Esophagus squamous epithelium (tissue), 5 donors: ENCODE measurements at regions of chr12 and their contacts with region 1.

Region 1: DNA sequence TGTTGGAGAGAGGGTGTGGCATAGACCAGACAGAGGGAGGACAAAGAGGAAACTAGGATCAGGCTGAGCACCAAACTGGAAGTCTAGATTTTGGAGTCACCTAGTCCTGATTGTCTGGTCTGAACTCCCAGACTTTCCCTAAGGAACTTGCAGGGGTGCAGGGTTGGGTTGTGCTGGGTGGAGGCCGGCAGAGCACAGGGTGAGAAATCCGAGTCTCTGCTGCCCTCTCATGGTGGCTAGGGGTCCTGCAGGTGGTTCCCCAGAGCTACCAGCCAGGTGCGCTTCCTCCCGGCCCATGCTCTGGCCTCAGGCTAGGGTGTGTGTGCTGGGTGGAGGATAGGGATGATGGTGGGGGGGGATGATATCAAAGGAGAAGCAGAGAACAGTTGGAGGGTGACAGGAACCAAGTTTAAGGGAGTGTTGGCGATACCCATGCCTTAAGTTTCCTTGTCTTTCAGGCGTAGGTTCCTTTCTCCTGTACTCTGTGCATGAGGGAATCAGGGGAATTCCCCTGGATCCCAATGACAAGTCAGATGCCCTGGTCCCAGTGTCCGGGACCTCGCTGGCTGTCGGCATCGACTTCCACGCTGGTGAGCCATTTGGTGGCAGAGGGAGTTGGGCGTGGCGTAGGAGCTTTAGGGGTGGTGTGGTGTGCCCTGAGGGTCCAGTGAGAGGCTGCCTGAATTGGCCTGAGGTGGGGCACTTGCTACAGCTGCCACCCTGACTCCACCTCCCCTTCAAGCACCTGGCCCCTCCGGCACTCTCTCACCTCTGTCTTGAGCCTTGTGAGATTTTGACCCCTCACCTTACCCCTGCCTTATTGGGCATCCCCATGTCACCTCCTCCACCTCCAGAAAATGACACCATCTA is 33.4 kb upstream of the NXPH4 start:
- DNase-seq: no peak
- H3K4me3 ChIP-seq: no peak overlapping the region
- H3K27ac ChIP-seq: peak overlapping the region in 3 of 4 donors; percentile 60 to 87 (median 71)
- H3K4me1 ChIP-seq: peaks cover 6 to 52% (median 13%) of the 10 kb centered on the region in 3 donors
- H3K27me3 ChIP-seq: no peaks in the 10 kb centered on the region
- CTCF ChIP-seq: peak; percentile 85 to 98 (median 94)
- POLR2A ChIP-seq: no peak

Region 2: GRCh38 chr12:56420411-56420810 is 762.7 kb before region 1 on chr12:
- intact Hi-C with region 1: no loop called
- DNase-seq: no peak
- H3K4me3 ChIP-seq: no peak overlapping the region
- H3K27ac ChIP-seq: no peak overlapping the region
- H3K4me1 ChIP-seq: no peaks in the 10 kb centered on the region
- H3K27me3 ChIP-seq: no peaks in the 10 kb centered on the region
- CTCF ChIP-seq: no peak
- POLR2A ChIP-seq: no peak

Region 3: GRCh38 chr12:56908136-56908535 is 275.0 kb before region 1 on chr12:
- intact Hi-C with region 1: no loop called
- DNase-seq: no peak
- H3K4me3 ChIP-seq: no peak overlapping the region
- H3K27ac ChIP-seq: no peak overlapping the region
- H3K4me1 ChIP-seq: no peaks in the 10 kb centered on the region
- H3K27me3 ChIP-seq: no peaks in the 10 kb centered on the region
- CTCF ChIP-seq: no peak
- POLR2A ChIP-seq: no peak

Region 4: DNA sequence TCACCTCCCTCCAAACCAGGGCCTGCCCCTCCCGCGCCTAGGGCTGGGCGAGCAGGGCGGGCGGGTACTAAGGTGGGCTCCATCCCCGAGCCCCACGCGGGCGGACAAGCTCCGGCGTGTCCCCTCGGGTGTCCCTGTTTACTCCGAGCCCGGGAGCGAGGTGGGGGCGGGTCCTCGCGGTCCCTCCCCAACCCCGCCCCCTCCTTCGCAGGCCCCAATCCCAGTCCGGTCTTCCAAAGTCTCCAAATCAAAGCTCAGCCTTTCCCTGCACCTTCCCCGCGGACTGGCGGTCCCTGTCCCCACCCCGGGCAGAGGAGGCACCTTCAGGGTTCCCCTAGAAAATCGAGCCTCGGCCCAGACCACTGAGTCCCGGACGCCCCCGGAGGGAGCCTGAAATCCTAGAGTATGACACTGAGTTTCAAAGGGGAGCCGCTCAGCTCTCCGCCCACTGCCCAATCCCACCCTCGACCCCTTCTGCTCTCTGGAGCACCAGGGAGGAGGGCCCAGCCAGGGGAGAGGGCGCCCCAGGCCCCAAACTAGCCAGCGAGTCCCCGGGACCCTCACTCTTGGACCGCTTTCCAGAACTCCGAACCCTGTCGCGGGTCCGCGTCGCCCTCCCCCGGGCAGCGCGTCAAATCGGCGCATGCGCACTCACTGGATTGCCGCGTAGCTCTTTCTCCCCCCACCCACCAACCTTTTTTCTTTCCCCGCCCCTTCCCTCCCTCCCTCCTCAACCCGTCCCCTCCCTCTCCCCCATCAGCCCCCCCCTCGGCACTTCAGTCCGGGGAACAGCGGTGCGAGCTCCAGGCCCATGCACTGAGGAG is 55.2 kb before region 1 on chr12 and contains the start of gene LRP1:
- intact Hi-C with region 1: loop called (anchors 2 kb)
- DNase-seq: no peak
- H3K4me3 ChIP-seq: peak within 1 kb of the TSS; percentile 69 to 87 (median 76)
- H3K27ac ChIP-seq: peak within 1 kb of the TSS; percentile 97 to 100 (median 98)
- H3K4me1 ChIP-seq: peaks cover 36 to 72% (median 51%) of the 10 kb centered on the region in 3 donors
- H3K27me3 ChIP-seq: peaks cover 0 to 13% (median 0%) of the 10 kb centered on the region in 4 donors
- CTCF ChIP-seq: peak in 1 of 6 experiments; percentile 4
- POLR2A ChIP-seq: peak in 3 of 4 donors; percentile 77 to 85 (median 82)
- total RNA-seq, gene LRP1: 60.8 to 147 (median 81.9) TPM

Region 5: DNA sequence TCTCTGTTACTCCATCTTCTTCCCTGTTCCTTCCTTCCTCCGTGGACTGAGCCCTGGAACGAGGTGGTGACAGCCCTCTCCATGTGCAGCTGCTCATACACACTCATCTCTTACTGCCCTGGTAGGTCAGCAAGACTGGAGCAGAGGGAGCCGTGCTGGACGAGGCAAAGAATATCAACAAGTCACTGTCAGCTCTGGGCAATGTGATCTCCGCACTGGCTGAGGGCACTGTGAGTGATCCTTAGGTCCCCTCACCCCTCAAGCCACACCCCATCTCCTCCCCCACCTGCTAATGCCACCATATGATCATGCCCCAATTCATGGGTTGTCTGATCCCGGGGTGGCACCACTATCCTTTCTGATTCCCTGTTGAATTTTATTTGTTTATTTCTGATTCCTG is 385.7 kb after region 1 on chr12:
- intact Hi-C with region 1: no loop called
- DNase-seq: no peak
- H3K4me3 ChIP-seq: no peak overlapping the region
- H3K27ac ChIP-seq: no peak overlapping the region
- H3K4me1 ChIP-seq: no peaks in the 10 kb centered on the region
- H3K27me3 ChIP-seq: peaks cover 0 to 7% (median 0%) of the 10 kb centered on the region in 4 donors
- CTCF ChIP-seq: no peak
- POLR2A ChIP-seq: no peak